ENCODE measurements at regions of chr16 and their contacts with region 1.

Region 1: GRCh38 chr16:959232-960040 is 11.3 kb downstream of the LMF1 start:
- DNase-seq: no peak
- ATAC-seq: no peak

Region 2: GRCh38 chr16:907842-908241 is 51.6 kb before region 1 on chr16:
- intact Hi-C with region 1: loop called in 1 of 2 experiments (anchors 5 kb)
- DNase-seq: no peak
- ATAC-seq: no peak

Region 3: GRCh38 chr16:1237990-1238389 is 278.6 kb after region 1 on chr16:
- intact Hi-C with region 1: no loop called
- DNase-seq: no peak
- ATAC-seq: no peak